Transverse colon (tissue), 4 donors: ENCODE measurements at regions of chr18 and their contacts with region 1.

Region 1: DNA sequence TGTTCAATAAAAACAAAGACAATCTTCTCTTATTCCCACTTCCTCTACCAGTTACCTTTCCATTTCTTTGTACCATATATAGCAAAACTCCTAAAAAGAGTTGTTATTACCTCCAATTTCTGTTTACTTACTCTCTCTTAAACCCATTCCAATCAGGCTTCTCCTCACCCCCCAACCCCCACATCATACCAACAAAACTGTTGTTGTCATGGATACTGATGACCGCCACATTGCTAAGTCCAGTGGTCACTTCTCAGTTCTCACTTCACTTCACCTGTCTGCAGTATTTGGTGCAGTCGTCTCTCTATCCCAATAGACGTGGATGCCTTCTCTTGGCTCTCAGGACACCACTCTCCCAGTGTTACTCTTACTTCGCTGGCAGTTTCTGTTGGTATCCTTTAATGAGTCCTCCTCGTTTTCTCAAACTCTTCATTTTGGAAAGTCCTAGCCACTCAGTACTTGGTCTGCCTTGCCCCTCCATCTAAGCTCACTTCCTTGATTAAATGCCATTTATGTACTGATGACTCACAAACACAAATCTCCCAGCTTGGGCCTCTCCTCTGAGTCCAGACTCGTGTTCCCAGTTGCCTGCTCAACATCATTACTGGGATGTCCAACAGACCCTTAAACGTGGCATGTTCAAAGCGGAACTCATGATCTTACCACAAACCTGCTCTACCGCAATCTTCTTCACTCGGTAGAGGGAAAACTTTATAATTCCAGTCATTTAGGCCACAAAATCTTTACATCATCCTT is 13.6 kb upstream of the CCDC68 start:
- DNase-seq: no peak
- H3K4me3 ChIP-seq: no peak overlapping the region
- H3K27ac ChIP-seq: no peak overlapping the region
- H3K4me1 ChIP-seq: no peaks in the 10 kb centered on the region
- H3K27me3 ChIP-seq: no peaks in the 10 kb centered on the region
- CTCF ChIP-seq: no peak
- EP300 ChIP-seq: no peak
- POLR2A ChIP-seq: no peak

Region 2: GRCh38 chr18:54679318-54680149 is 293.3 kb before region 1 on chr18:
- in situ Hi-C with region 1: loop called in 1 of 4 experiments (anchors 10 kb)
- intact Hi-C with region 1: no loop called
- DNase-seq: no peak
- H3K4me3 ChIP-seq: no peak overlapping the region
- H3K27ac ChIP-seq: no peak overlapping the region
- H3K4me1 ChIP-seq: no peaks in the 10 kb centered on the region
- H3K27me3 ChIP-seq: no peaks in the 10 kb centered on the region
- CTCF ChIP-seq: peak; percentile 29 to 56 (median 54)
- EP300 ChIP-seq: no peak
- POLR2A ChIP-seq: no peak